H1 (cell line): ENCODE measurements at regions of chr15 and their contacts with region 1.

Region 1: GRCh38 chr15:57751177-57751800 is 44.8 kb downstream of the POLR2M start:
- DNase-seq: no peak
- H3K4me3 ChIP-seq: no peak overlapping the region
- H3K27ac ChIP-seq: no peak overlapping the region
- H3K4me1 ChIP-seq: peaks cover 9 to 12% (median 10%) of the 10 kb centered on the region in 4 experiments
- H3K27me3 ChIP-seq: no peaks in the 10 kb centered on the region
- CTCF ChIP-seq: peak in 2 of 3 experiments; percentile 67 to 78; a peak in 3 of 4 replicates
- EP300 ChIP-seq: no peak
- POLR2A ChIP-seq: no peak
- RAD21 ChIP-seq: peak; percentile 76 to 82

Region 2: GRCh38 chr15:57440799-57441198 is 310.5 kb before region 1 on chr15:
- CTCF ChIA-PET with region 1: no interaction called
- POLR2A ChIA-PET with region 1: no interaction called
- DNase-seq: no peak
- H3K4me3 ChIP-seq: no peak overlapping the region
- H3K27ac ChIP-seq: no peak overlapping the region
- H3K4me1 ChIP-seq: peaks cover 0 to 6% (median 4%) of the 10 kb centered on the region in 4 experiments; a peak in 5 of 7 replicates
- H3K27me3 ChIP-seq: no peaks in the 10 kb centered on the region
- CTCF ChIP-seq: no peak
- EP300 ChIP-seq: no peak
- POLR2A ChIP-seq: no peak
- RAD21 ChIP-seq: no peak

Region 3: GRCh38 chr15:57676585-57676984 is 74.7 kb before region 1 on chr15:
- CTCF ChIA-PET with region 1: no interaction called
- POLR2A ChIA-PET with region 1: no interaction called
- DNase-seq: no peak
- H3K4me3 ChIP-seq: no peak overlapping the region
- H3K27ac ChIP-seq: no peak overlapping the region
- H3K4me1 ChIP-seq: no peaks in the 10 kb centered on the region
- H3K27me3 ChIP-seq: no peaks in the 10 kb centered on the region
- CTCF ChIP-seq: no peak
- EP300 ChIP-seq: no peak
- POLR2A ChIP-seq: no peak
- RAD21 ChIP-seq: no peak

Region 4: DNA sequence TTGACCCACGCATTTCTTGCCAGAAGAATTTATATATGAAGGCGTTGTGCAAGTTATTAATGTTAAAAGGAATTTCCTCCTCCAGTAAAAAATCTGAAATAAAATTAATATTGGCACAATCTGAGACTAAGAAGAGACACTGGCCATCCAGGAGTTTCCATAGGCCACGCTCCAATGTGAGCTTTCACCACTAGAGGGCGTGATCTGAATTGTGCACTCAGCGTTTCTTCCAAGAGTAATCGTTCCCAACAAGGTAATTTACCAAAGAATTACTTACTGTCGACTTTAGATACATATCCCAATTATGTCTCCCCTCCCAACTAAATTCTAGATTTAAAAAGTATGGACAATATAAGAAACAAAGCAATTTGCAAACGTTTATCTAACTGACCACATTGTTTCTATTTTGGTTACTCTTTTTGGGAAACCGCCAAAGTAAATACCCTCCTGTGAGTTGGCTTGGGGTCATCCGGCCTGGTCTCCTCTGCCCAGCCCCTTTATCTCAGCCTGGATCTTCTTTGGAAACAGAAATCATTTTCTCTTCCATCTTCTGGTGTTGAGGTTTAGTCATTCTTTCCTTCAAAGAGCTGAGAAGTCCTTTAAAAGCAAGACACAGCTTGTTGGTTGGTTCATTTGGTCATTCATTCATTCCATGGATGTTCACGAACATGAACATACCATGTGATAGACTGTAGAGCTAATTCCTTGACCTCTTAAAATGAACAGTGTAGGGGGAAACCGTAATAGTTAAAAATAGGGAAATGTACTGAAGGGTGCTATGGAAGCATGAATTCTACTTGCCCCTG is 18.6 kb before region 1 on chr15:
- CTCF ChIA-PET with region 1: interaction called, 165 read pairs
- POLR2A ChIA-PET with region 1: no interaction called
- DNase-seq: peak in 1 of 2 experiments; percentile 80
- H3K4me3 ChIP-seq: no peak overlapping the region
- H3K27ac ChIP-seq: no peak overlapping the region
- H3K4me1 ChIP-seq: peaks cover 0 to 6% (median 0%) of the 10 kb centered on the region in 4 experiments; a peak in 1 of 7 replicates
- H3K27me3 ChIP-seq: no peaks in the 10 kb centered on the region
- CTCF ChIP-seq: peak; percentile 59 to 83 (median 76)
- EP300 ChIP-seq: no peak
- POLR2A ChIP-seq: no peak
- RAD21 ChIP-seq: peak; percentile 56 to 67

Region 5: DNA sequence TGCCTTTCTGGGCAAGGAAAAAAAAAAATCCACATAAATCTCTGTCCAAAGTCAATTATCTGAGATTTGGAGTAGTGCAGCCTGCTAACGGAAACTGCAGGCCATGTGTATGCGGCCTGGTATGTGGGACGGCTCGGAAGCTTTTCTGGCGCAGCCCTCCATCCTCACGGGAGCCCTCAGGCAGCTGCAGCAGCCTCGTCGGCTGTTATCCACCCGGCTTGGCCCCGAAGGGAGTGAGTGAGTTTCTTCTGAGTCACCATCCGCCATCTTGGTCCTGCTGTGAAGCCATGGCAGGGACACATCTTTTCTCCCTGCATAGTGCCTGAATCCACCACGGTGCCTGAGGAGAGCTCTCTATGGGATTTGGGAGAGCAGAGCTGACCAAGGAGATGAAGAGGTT is 18.0 kb after region 1 on chr15:
- CTCF ChIA-PET with region 1: interaction called, 18 read pairs
- POLR2A ChIA-PET with region 1: no interaction called
- DNase-seq: no peak
- H3K4me3 ChIP-seq: no peak overlapping the region
- H3K27ac ChIP-seq: no peak overlapping the region
- H3K4me1 ChIP-seq: peaks cover 0 to 7% (median 4%) of the 10 kb centered on the region in 4 experiments; a peak in 3 of 7 replicates
- H3K27me3 ChIP-seq: no peaks in the 10 kb centered on the region
- CTCF ChIP-seq: no peak
- EP300 ChIP-seq: no peak
- POLR2A ChIP-seq: no peak
- RAD21 ChIP-seq: no peak

Region 6: GRCh38 chr15:57806003-57806402 is 54.7 kb after region 1 on chr15:
- CTCF ChIA-PET with region 1: interaction called, 10 read pairs
- POLR2A ChIA-PET with region 1: no interaction called
- DNase-seq: no peak
- H3K4me3 ChIP-seq: no peak overlapping the region
- H3K27ac ChIP-seq: no peak overlapping the region
- H3K4me1 ChIP-seq: no peaks in the 10 kb centered on the region
- H3K27me3 ChIP-seq: no peaks in the 10 kb centered on the region
- CTCF ChIP-seq: no peak
- EP300 ChIP-seq: no peak
- POLR2A ChIP-seq: no peak
- RAD21 ChIP-seq: no peak

Region 7: GRCh38 chr15:57849317-57849716 is 98.0 kb after region 1 on chr15:
- CTCF ChIA-PET with region 1: interaction called, 22 read pairs
- POLR2A ChIA-PET with region 1: no interaction called
- DNase-seq: no peak
- H3K4me3 ChIP-seq: no peak overlapping the region
- H3K27ac ChIP-seq: no peak overlapping the region
- H3K4me1 ChIP-seq: no peaks in the 10 kb centered on the region
- H3K27me3 ChIP-seq: no peaks in the 10 kb centered on the region
- CTCF ChIP-seq: no peak
- EP300 ChIP-seq: no peak
- POLR2A ChIP-seq: no peak
- RAD21 ChIP-seq: no peak